Transverse colon (tissue), 4 donors: ENCODE measurements at regions of chr4 and their contacts with region 1.

Region 1: GRCh38 chr4:72846280-72847111 is 223.0 kb downstream of the COX18 start:
- DNase-seq: no peak
- H3K4me3 ChIP-seq: no peak overlapping the region
- H3K27ac ChIP-seq: no peak overlapping the region
- H3K4me1 ChIP-seq: no peaks in the 10 kb centered on the region
- H3K27me3 ChIP-seq: no peaks in the 10 kb centered on the region
- CTCF ChIP-seq: no peak
- EP300 ChIP-seq: no peak
- POLR2A ChIP-seq: no peak

Region 2: DNA sequence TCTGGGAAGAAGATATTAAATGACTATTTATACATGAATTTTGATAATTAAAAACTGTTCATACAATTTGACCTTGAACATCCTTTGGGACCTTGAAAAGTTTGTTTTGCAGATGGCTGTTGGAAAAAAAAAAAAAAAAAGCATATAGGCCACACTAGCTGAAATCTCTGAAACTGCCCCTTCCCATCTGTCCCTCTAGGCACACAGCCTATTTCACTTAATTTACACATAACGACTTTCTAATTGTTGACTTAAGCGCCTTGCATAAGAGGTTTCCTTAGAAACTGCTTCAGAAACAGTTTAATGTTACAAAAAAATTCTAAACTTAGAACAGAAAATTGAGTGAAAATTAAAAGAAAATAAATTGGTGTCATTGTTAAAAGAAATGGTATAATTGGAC is 92.0 kb after region 1 on chr4:
- in situ Hi-C with region 1: loop called in 1 of 4 experiments (anchors 25 kb)
- intact Hi-C with region 1: no loop called
- DNase-seq: no peak
- H3K4me3 ChIP-seq: no peak overlapping the region
- H3K27ac ChIP-seq: no peak overlapping the region
- H3K4me1 ChIP-seq: no peaks in the 10 kb centered on the region
- H3K27me3 ChIP-seq: no peaks in the 10 kb centered on the region
- CTCF ChIP-seq: no peak
- EP300 ChIP-seq: no peak
- POLR2A ChIP-seq: no peak

Region 3: GRCh38 chr4:73001885-73002284 is 155.4 kb after region 1 on chr4:
- in situ Hi-C with region 1: no loop called
- intact Hi-C with region 1: loop called (anchors 5 kb)
- DNase-seq: no peak
- H3K4me3 ChIP-seq: no peak overlapping the region
- H3K27ac ChIP-seq: no peak overlapping the region
- H3K4me1 ChIP-seq: no peaks in the 10 kb centered on the region
- H3K27me3 ChIP-seq: no peaks in the 10 kb centered on the region
- CTCF ChIP-seq: no peak
- EP300 ChIP-seq: no peak
- POLR2A ChIP-seq: no peak